ENCODE measurements at regions of chr6 and their contacts with region 1.

Region 1: DNA sequence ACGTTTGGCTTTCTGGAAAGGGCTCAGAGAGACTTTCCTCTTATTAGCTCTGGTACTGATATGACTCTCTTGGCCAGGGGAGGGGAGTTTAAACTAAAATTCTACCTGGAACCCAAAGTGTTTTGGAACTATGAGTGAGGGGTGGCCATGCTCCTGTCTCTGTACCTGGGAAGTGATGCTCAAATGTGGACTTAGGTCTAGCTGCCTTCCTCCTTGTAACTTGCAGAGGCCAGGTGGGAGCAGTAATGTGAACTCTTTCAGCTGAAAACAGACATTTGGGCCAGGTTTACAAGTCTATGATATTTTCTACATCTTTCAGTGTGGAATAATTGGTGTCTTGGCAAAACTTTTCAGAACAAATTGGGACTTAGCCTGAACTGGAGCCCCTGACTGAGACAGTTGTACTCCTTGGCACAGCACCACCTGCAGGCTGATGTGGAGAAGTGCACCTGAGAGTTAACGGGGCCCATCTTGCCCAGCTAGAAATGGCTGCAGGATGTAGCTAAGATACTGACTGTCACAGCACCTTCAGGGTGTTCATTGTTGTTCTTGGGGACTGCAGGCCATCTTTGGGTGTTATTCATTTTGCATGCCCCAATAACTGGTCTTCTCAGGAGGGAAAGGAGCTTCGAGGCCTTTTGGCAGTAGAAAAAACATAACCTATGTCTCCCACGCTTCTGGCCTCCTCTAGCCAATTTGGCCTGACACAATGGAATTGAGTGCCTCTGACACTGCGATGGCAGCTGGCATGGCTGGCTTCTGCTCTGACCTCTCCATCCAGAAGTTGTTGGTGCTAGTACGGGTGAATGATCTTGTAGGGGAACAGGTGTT is 37.1 kb downstream of the CD109 start:
- DNase-seq: peak; percentile 80
- H3K4me3 ChIP-seq: no peak overlapping the region
- H3K27ac ChIP-seq: no peak overlapping the region
- H3K4me1 ChIP-seq: no peaks in the 10 kb centered on the region
- H3K27me3 ChIP-seq: no peaks in the 10 kb centered on the region
- CTCF ChIP-seq: peak; percentile 97

Region 2: GRCh38 chr6:73675466-73676098 is 57.5 kb before region 1 on chr6:
- CTCF ChIA-PET with region 1: interaction called, 9 read pairs
- POLR2A ChIA-PET with region 1: no interaction called
- intact Hi-C with region 1: loop called (anchors 1 kb)
- DNase-seq: peak; percentile 76
- H3K4me3 ChIP-seq: no peak overlapping the region
- H3K27ac ChIP-seq: no peak overlapping the region
- H3K4me1 ChIP-seq: no peaks in the 10 kb centered on the region
- H3K27me3 ChIP-seq: no peaks in the 10 kb centered on the region
- CTCF ChIP-seq: peak; percentile 88

Region 3: GRCh38 chr6:74780831-74781230 is 1047.8 kb after region 1 on chr6:
- CTCF ChIA-PET with region 1: no interaction called
- POLR2A ChIA-PET with region 1: no interaction called
- intact Hi-C with region 1: no loop called
- DNase-seq: no peak
- H3K4me3 ChIP-seq: no peak overlapping the region
- H3K27ac ChIP-seq: no peak overlapping the region
- H3K4me1 ChIP-seq: no peaks in the 10 kb centered on the region
- H3K27me3 ChIP-seq: no peaks in the 10 kb centered on the region
- CTCF ChIP-seq: no peak

Measured in A673 (cell line).